HCT116 (cell line): ENCODE measurements at regions of chr3 and their contacts with region 1.

Region 1: GRCh38 chr3:96863129-96863740 is 48.8 kb downstream of the EPHA6 start:
- DNase-seq: no peak
- ATAC-seq: no peak
- H3K4me3 ChIP-seq: no peak overlapping the region
- H3K27ac ChIP-seq: no peak overlapping the region
- H3K4me1 ChIP-seq: no peaks in the 10 kb centered on the region
- H3K27me3 ChIP-seq: no peaks in the 10 kb centered on the region
- CTCF ChIP-seq: peak in 2 of 3 experiments; percentile 31 to 40; a peak in 3 of 6 replicates
- POLR2A ChIP-seq: no peak
- RAD21 ChIP-seq: peak; percentile 25; the same call in 1 of the 2 replicates

Region 2: DNA sequence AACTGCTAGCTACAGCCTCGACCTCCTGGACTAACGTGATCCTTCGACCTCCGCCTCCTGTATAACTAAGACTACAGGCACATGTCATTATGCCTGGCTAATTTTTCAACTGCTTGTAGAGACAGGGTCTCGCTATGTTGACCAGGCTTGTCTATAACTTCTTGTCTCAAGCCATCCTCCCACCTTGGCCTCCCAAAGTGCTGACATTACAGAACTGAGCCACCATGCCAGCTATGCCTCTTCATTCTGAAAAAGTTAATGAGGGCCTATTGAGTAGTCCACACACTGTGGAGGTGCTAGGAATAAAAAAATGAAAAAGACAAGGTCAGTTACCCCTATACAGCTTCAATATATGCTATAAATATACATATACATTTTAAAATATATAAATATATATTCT is 67.1 kb before region 1 on chr3:
- CTCF ChIA-PET with region 1: no interaction called
- POLR2A ChIA-PET with region 1: no interaction called
- RAD21 ChIA-PET with region 1: no interaction called
- intact Hi-C with region 1: no loop called
- DNase-seq: no peak
- ATAC-seq: no peak
- H3K4me3 ChIP-seq: no peak overlapping the region
- H3K27ac ChIP-seq: no peak overlapping the region
- H3K4me1 ChIP-seq: no peaks in the 10 kb centered on the region
- H3K27me3 ChIP-seq: no peaks in the 10 kb centered on the region
- CTCF ChIP-seq: no peak
- POLR2A ChIP-seq: no peak
- RAD21 ChIP-seq: no peak

Region 3: GRCh38 chr3:97658668-97659285 is 795.5 kb after region 1 on chr3:
- CTCF ChIA-PET with region 1: no interaction called
- POLR2A ChIA-PET with region 1: no interaction called
- RAD21 ChIA-PET with region 1: no interaction called
- intact Hi-C with region 1: loop called (anchors 5 kb)
- DNase-seq: peak; percentile 8
- ATAC-seq: no peak
- H3K4me3 ChIP-seq: no peak overlapping the region
- H3K27ac ChIP-seq: no peak overlapping the region
- H3K4me1 ChIP-seq: no peaks in the 10 kb centered on the region
- H3K27me3 ChIP-seq: no peaks in the 10 kb centered on the region
- CTCF ChIP-seq: peak; percentile 9 to 78 (median 70); a peak in 4 of 6 replicates
- POLR2A ChIP-seq: no peak
- RAD21 ChIP-seq: peak; percentile 37

Region 4: DNA sequence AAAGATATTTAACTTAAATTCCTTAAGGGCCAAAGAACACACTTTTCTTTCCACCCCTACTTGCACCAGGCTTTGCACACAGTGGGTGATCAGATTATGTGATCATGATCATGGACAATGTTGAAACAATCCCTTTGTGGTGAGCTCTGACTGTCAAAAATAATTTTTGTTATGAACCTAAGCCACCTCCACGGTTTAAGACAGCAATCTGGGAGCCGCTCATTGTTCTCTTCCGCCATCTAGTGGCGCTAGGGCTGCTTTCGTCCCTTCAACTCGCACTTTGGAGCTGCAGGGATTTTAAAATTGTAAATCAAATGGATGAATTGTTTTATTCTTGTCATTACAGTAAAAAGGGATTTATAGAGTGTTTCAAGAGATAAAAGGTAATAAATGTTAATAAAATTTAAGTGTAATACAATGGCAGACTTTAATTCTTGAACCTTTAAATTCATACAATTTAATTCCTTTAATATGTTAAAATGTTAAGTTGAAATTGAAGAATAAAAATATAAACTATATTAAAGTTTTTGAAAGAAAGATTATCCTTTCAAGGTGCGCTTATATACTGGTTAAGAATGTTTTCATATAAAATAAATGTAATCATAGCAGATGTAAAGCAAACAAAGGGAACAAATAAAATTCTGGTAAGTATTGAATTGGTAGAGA is 856.1 kb after region 1 on chr3:
- CTCF ChIA-PET with region 1: interaction called, 3 read pairs
- POLR2A ChIA-PET with region 1: no interaction called
- RAD21 ChIA-PET with region 1: no interaction called
- intact Hi-C with region 1: loop called (anchors 5 kb)
- DNase-seq: peak; percentile 52
- ATAC-seq: peak; percentile 92
- H3K4me3 ChIP-seq: no peak overlapping the region
- H3K27ac ChIP-seq: no peak overlapping the region
- H3K4me1 ChIP-seq: no peaks in the 10 kb centered on the region
- H3K27me3 ChIP-seq: no peaks in the 10 kb centered on the region
- CTCF ChIP-seq: peak; percentile 33 to 96 (median 95); a peak in 5 of 6 replicates
- POLR2A ChIP-seq: no peak
- RAD21 ChIP-seq: peak; percentile 66

Region 5: DNA sequence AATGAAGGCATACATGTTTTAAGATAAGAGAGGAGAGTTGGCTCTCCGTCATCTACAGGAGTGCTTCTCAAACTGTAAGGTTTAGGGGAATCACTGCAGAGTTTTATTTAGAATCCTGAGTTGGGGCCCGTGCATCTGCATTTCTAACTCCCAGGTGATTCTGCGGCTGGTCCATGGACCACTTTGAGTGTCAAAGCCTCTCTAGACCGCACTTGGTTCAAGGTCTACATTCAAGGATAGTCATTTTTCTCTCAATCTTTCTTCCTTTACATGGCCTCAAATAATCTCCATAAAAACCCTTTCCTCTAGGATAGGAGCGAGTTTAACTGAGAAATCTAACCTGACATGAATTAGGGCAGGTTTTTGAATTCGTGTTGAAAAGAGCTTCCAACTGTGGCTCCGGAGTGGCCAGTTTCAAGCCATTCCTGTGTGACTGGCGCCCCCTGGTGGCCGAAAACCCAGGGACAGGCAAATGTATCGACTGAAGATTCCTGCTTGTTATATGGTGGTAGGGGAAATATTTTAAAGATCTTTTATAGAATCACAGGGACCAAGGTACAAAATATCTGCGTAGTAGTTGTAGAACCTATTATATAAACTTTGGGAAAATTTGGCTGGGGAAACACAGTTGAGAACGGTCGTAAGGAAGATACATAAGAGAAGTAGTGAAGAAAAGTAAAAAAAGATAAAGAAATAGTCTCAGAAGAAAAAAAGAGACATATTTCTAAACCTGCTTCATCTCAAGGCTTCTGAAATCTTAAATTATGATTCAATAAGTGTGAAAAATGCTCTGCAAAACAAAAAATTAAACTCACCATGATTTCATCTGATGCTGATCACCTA is 1160.0 kb after region 1 on chr3:
- CTCF ChIA-PET with region 1: no interaction called
- POLR2A ChIA-PET with region 1: no interaction called
- RAD21 ChIA-PET with region 1: no interaction called
- intact Hi-C with region 1: loop called (anchors 5 kb)
- DNase-seq: peak; percentile 60
- ATAC-seq: peak; percentile 97
- H3K4me3 ChIP-seq: no peak overlapping the region
- H3K27ac ChIP-seq: no peak overlapping the region
- H3K4me1 ChIP-seq: no peaks in the 10 kb centered on the region
- H3K27me3 ChIP-seq: no peaks in the 10 kb centered on the region
- CTCF ChIP-seq: peak; percentile 65 to 98 (median 90); a peak in 5 of 6 replicates
- POLR2A ChIP-seq: no peak
- RAD21 ChIP-seq: peak; percentile 88